ENCODE measurements at regions of chr5 and their contacts with region 1.

Region 1: GRCh38 chr5:139765409-139766217 is 30.0 kb upstream of the PSD2 start:
- DNase-seq: no peak
- H3K4me3 ChIP-seq: peak overlapping the region; percentile 72
- CTCF ChIP-seq: peak; percentile 87

Region 2: GRCh38 chr5:139651853-139652787 is 113.5 kb before region 1 on chr5:
- CTCF ChIA-PET with region 1: interaction called, 32 read pairs
- POLR2A ChIA-PET with region 1: interaction called, 10 read pairs
- DNase-seq: no peak
- H3K4me3 ChIP-seq: peak overlapping the region; percentile 85
- CTCF ChIP-seq: no peak

Region 3: GRCh38 chr5:139670369-139671095 is 95.1 kb before region 1 on chr5:
- CTCF ChIA-PET with region 1: interaction called, 19 read pairs
- POLR2A ChIA-PET with region 1: no interaction called
- DNase-seq: no peak
- H3K4me3 ChIP-seq: no peak overlapping the region
- CTCF ChIP-seq: peak; percentile 21

Region 4: GRCh38 chr5:139711067-139711905 is 54.3 kb before region 1 on chr5:
- CTCF ChIA-PET with region 1: interaction called, 29 read pairs
- POLR2A ChIA-PET with region 1: no interaction called
- DNase-seq: no peak
- H3K4me3 ChIP-seq: peak overlapping the region; percentile 59
- CTCF ChIP-seq: peak; percentile 16

Region 5: DNA sequence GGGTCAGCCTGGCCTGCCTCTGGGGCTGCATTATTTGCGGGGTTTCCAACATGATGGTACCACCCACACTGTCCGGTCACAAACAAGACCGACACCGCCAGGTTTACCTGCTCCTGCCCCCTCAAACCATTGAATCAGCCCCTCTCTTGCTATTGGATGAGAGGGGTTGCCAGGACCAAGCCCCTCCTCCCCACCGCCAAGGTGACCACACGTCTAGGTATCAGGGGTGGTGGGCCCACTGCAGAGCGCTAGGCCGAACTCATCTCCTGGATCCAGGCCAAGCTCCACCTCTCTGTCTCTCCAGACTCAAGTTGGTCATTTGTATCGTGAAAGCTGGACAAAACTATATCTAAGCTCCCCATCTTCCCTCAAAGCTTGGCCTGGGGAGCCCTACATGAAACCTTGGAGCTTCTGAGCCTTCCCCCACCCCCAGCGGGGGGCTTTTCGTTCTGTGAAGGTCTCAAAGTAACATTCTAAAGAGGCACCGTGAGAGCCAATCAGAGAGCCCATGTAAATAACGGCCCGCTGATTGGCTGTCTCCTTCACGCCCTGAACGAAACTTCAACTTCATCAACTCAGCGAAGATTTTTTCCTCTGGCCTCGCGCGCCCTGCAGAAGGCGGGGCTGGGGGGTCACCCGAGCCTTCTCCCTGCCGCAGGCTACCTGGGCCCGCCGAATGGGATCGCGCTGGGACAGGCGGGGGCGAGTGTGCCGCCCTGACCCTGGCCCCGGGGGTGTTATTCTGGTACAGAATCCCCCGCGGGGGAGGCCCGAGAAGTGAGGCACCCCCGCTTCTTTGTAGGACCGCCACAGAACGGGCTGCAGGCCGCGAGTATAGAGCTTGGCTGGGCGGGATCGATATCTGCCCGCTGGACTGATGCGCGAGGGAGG is 19.6 kb before region 1 on chr5:
- CTCF ChIA-PET with region 1: interaction called, 45 read pairs
- POLR2A ChIA-PET with region 1: interaction called, 3 read pairs
- DNase-seq: peak; percentile 24
- H3K4me3 ChIP-seq: peak overlapping the region; percentile 18
- CTCF ChIP-seq: no peak